Activated CD4-positive, alpha-beta memory T cell treated with anti-CD3 and anti-CD28 coated beads for 36 hours (primary cell): ENCODE measurements at regions of chr12 and their contacts with region 1.

Region 1: GRCh38 chr12:120292661-120293531 is at the start of gene RNU4-1:
- DNase-seq: peak; percentile 87
- H3K4me3 Mint-ChIP-seq: no peak within 1 kb of the TSS
- H3K27ac Mint-ChIP-seq: no peak within 1 kb of the TSS
- H3K4me1 Mint-ChIP-seq: peaks cover 5% of the 10 kb centered on the region
- H3K27me3 Mint-ChIP-seq: no peaks in the 10 kb centered on the region
- total RNA-seq, gene RNU4-1: 1,180 to 1,201 TPM

Region 2: DNA sequence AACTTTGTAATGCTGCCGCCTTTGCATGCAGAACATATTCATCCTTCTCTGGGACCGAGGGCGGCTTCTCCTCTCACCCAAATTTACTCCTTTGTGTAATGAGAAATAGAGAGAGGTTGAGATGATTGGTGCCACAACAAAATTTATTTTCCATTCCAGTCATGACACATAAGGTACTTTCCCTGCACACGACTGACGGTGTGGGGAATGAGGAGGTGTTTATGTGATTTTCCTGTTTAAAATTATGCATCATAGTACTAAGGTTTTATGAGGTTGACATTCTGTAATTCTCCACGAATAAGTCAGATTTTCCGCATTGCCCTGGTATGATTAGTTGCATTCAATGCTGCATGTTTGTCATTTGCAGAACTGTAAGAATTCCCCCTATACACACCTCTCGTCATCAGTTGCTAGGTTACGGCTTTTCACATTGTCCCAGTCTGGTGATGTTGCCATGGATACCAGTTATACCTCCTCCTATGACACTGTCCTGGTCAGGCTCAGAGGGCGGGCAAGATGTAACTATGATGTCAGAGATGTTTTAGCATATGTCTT is 280.8 kb before region 1 on chr12:
- CTCF ChIA-PET with region 1: no interaction called
- POLR2A ChIA-PET with region 1: interaction called, 27 read pairs
- intact Hi-C with region 1: loop called (anchors 2 kb)
- DNase-seq: peak; percentile 88
- H3K4me3 Mint-ChIP-seq: peak overlapping the region; percentile 70
- H3K27ac Mint-ChIP-seq: peak overlapping the region; percentile 96
- H3K4me1 Mint-ChIP-seq: peaks cover 88% of the 10 kb centered on the region
- H3K27me3 Mint-ChIP-seq: peaks cover 2% of the 10 kb centered on the region

Region 3: DNA sequence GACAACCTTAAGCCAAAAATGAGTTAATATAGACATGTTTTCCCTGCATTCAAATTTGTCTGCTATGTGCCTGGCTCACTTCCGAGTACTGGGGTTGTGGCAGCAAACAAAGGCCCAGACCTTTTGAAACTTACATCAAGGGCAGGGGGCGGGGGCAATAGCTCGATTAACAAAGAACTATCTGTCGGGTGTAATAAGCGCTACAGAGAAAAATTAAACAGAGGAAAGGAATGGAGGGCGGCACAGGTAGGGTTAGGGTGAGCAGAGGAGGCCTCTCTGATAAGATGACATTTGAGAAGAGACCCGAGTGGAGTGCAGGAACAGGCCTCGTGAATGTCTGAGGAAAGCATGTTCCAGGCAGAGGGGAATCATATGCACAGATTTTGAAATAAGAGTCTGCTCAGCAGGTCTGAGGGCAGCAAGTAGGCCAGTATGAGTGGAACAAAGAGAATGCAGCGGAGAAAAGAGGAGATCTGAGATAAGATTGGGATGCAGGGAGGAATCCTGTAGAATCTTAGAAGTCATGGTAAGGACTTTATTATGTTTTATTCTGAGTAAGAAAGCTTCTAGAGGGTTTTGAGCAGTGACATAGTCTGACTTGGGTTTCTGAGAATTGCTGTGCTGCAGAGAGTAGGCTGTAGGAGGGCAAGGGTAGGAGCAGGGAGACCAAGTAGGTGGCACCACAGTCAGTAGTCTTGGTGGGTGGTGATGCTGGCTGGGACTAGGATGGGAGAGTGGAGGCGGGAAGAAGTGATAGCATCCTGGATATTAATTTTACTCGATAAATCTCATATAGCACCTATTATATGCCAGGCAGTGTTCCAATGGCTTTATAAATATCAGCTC is 251.3 kb before region 1 on chr12:
- CTCF ChIA-PET with region 1: no interaction called
- POLR2A ChIA-PET with region 1: no interaction called
- intact Hi-C with region 1: no loop called
- DNase-seq: peak; percentile 44
- H3K4me3 Mint-ChIP-seq: no peak overlapping the region
- H3K27ac Mint-ChIP-seq: peak overlapping the region; percentile 74
- H3K4me1 Mint-ChIP-seq: peaks cover 32% of the 10 kb centered on the region
- H3K27me3 Mint-ChIP-seq: no peaks in the 10 kb centered on the region

Region 4: DNA sequence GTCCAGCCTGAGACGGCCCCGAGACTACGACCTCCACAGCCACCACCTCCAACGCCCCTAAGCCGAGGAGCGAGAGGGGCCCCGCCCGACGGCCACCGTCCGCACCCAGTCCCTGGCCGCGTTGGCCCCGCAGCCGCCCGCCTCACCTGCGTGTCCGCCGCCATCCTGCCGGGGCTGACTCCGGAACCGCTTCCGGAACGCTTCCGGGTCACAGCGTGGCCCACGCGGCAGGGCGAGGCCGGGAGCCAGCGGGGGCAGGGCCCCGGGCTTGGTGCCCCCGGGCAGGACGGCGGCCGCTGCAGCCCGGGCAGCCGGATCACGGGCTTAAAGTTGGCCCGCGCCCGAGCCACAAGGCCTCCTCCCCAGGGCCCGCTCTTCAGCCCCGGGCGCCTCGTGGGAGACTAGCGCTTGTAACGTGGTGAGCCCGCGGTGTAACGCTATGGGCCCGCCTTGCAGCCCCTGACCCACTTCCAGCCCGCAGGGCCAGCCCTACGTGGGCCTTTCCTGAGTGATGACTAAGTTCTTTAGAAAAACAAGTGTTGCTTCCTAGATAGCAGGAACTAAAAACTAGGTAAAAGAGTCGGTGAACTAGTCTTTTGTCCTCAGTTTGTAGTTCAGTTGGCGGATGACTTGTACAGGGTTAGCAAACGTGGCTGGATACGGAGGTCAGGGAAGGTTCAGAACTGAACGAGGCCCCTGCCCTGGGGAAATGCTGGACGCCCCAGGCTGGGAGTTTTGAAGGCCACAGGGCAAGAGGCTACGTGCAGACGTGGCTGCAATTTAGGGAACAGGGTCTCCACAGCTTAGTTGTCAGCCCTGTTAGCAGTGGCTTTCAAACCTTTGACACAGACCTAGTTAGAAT is 98.1 kb before region 1 on chr12 and contains the start of gene GCN1:
- CTCF ChIA-PET with region 1: interaction called, 3 read pairs
- POLR2A ChIA-PET with region 1: interaction called, 208 read pairs
- intact Hi-C with region 1: loop called (anchors 1 kb)
- DNase-seq: peak; percentile 91
- H3K4me3 Mint-ChIP-seq: peak within 1 kb of the TSS; percentile 91
- H3K27ac Mint-ChIP-seq: peak within 1 kb of the TSS; percentile 98
- H3K4me1 Mint-ChIP-seq: peaks cover 51% of the 10 kb centered on the region
- H3K27me3 Mint-ChIP-seq: no peaks in the 10 kb centered on the region
- total RNA-seq, gene GCN1: 121 TPM

Region 5: GRCh38 chr12:120228291-120229070 is 64.4 kb before region 1 on chr12:
- CTCF ChIA-PET with region 1: interaction called, 150 read pairs
- POLR2A ChIA-PET with region 1: interaction called, 261 read pairs
- intact Hi-C with region 1: loop called (anchors 1 kb)
- DNase-seq: peak; percentile 94
- H3K4me3 Mint-ChIP-seq: peak overlapping the region; percentile 3
- H3K27ac Mint-ChIP-seq: peak overlapping the region; percentile 93
- H3K4me1 Mint-ChIP-seq: peaks cover 79% of the 10 kb centered on the region
- H3K27me3 Mint-ChIP-seq: no peaks in the 10 kb centered on the region

Region 6: GRCh38 chr12:120249875-120250795 is 42.8 kb before region 1 on chr12:
- CTCF ChIA-PET with region 1: interaction called, 9 read pairs
- POLR2A ChIA-PET with region 1: interaction called, 69 read pairs
- intact Hi-C with region 1: loop called (anchors 1 kb)
- DNase-seq: peak; percentile 64
- H3K4me3 Mint-ChIP-seq: peak overlapping the region; percentile 39
- H3K27ac Mint-ChIP-seq: peak overlapping the region; percentile 81
- H3K4me1 Mint-ChIP-seq: peaks cover 78% of the 10 kb centered on the region
- H3K27me3 Mint-ChIP-seq: no peaks in the 10 kb centered on the region

Region 7: GRCh38 chr12:120317224-120318105 is 24.6 kb after region 1 on chr12:
- CTCF ChIA-PET with region 1: no interaction called
- POLR2A ChIA-PET with region 1: interaction called, 30 read pairs
- intact Hi-C with region 1: loop called (anchors 1 kb)
- DNase-seq: peak; percentile 100
- H3K4me3 Mint-ChIP-seq: peak overlapping the region; percentile 90
- H3K27ac Mint-ChIP-seq: peak overlapping the region; percentile 88
- H3K4me1 Mint-ChIP-seq: peaks cover 13% of the 10 kb centered on the region
- H3K27me3 Mint-ChIP-seq: no peaks in the 10 kb centered on the region

Region 8: GRCh38 chr12:120580787-120581723 is 288.2 kb after region 1 on chr12 and contains the start of gene POP5:
- CTCF ChIA-PET with region 1: no interaction called
- POLR2A ChIA-PET with region 1: interaction called, 10 read pairs
- intact Hi-C with region 1: no loop called
- DNase-seq: peak; percentile 97
- H3K4me3 Mint-ChIP-seq: peak within 1 kb of the TSS; percentile 96
- H3K27ac Mint-ChIP-seq: peak within 1 kb of the TSS; percentile 86
- H3K4me1 Mint-ChIP-seq: peaks cover 33% of the 10 kb centered on the region
- H3K27me3 Mint-ChIP-seq: no peaks in the 10 kb centered on the region
- total RNA-seq, gene POP5: 54.1 to 55.7 TPM